Caco-2 (cell line): ENCODE measurements at regions of chr19 and their contacts with region 1.

Region 1: DNA sequence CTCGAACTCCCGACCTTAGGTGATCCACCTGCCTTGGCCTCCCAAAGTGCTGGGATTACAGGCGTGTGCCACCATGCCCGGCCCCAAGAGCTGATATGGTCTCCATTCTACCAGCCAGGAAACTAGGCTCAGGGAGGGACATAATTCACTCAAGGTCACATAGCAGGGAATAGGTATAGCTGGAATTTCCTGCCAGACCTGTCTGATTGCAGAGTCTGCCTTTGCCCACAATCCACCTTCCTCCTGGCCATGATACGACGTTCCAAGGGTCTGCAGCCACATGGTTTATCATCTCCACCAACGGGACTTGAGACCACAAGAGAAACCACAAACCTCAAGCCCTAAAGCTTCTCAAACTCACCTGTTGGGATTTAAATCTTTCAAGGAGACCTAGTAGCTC is 32.0 kb downstream of the ZNRF4 start:
- DNase-seq: peak in 1 of 2 experiments; percentile 25
- H3K4me3 ChIP-seq: no peak overlapping the region
- H3K4me3 Mint-ChIP-seq: no peak overlapping the region
- H3K27ac Mint-ChIP-seq: no peak overlapping the region
- H3K4me1 ChIP-seq: peaks cover 9% of the 10 kb centered on the region
- H3K4me1 Mint-ChIP-seq: no peaks in the 10 kb centered on the region
- H3K27me3 ChIP-seq: no peaks in the 10 kb centered on the region
- H3K27me3 Mint-ChIP-seq: no peaks in the 10 kb centered on the region
- CTCF ChIP-seq: no peak

Region 2: DNA sequence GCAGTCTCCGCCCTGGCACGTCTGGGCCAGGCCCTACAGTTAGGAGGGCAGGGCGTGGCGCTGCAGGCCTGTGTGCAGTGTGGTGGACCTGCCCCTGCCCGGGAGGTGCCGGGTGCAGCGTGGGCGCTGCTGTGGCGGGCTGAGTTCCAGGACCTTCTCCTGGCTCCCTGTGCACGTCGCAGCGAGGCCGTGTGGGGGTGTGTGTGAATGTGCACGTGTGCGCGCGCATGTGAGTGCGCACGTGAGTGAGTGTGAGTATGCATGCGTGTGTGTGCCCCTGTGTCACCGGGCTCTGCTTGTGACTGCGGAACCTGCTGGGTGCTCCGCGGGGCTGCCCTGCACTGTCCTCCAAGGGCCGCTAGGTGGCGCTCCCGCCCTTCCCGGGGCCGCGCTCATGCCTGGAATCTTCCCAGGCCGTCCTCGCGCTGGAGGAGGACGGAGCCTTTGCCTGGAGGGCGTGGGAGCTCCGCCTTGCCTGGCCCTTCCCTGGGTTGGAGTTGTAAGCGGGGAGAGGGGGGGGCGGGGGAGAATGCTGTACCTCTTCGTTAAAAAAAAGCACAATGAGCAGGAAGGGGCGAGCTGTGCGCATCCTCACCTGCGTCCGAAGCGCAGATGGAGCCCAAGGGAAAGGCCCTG is 439.0 kb before region 1 on chr19:
- CTCF ChIA-PET with region 1: no interaction called
- POLR2A ChIA-PET with region 1: interaction called, 14 read pairs
- intact Hi-C with region 1: no loop called
- DNase-seq: peak; percentile 81 to 86
- H3K4me3 ChIP-seq: no peak overlapping the region
- H3K4me3 Mint-ChIP-seq: no peak overlapping the region
- H3K27ac Mint-ChIP-seq: no peak overlapping the region
- H3K4me1 ChIP-seq: peaks cover 27% of the 10 kb centered on the region
- H3K4me1 Mint-ChIP-seq: peaks cover 14% of the 10 kb centered on the region
- H3K27me3 ChIP-seq: no peaks in the 10 kb centered on the region
- H3K27me3 Mint-ChIP-seq: no peaks in the 10 kb centered on the region
- CTCF ChIP-seq: peak; percentile 96

Region 3: DNA sequence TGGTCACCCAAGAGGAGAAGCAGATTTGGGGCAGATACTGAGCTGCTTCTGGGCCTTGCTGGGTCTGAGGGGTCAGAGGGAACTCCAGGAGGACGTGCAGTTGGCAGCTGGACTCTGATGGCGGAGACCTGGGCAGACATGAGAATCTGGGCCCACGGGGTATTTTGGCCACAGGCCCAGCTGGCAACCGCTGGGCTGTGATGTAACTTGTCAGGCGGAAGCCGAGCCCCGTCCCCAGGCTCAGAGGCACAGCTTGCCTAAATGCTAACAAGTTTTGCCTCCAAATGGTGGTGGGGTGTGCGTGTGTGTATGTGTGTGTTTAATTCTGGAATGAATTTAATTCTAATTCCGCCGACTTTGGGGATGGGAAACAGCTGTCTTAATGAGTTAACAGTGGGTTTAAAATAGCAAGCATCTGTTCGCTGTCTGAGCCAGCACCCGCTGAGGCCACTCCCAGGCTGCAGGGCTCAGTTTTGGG is 20.4 kb before region 1 on chr19:
- CTCF ChIA-PET with region 1: no interaction called
- POLR2A ChIA-PET with region 1: no interaction called
- intact Hi-C with region 1: no loop called
- DNase-seq: no peak
- H3K4me3 ChIP-seq: no peak overlapping the region
- H3K4me3 Mint-ChIP-seq: no peak overlapping the region
- H3K27ac Mint-ChIP-seq: peak overlapping the region; percentile 58
- H3K4me1 ChIP-seq: peaks cover 45% of the 10 kb centered on the region
- H3K4me1 Mint-ChIP-seq: peaks cover 35% of the 10 kb centered on the region
- H3K27me3 ChIP-seq: no peaks in the 10 kb centered on the region
- H3K27me3 Mint-ChIP-seq: no peaks in the 10 kb centered on the region
- CTCF ChIP-seq: no peak